ENCODE measurements at regions of chr15 and their contacts with region 1.

Region 1: GRCh38 chr15:40941528-40942336 is 11.5 kb upstream of the CHAC1 start:
- DNase-seq: peak; percentile 27
- H3K4me3 ChIP-seq: peak overlapping the region; percentile 54
- H3K27ac ChIP-seq: peak overlapping the region; percentile 81
- H3K27me3 ChIP-seq: no peaks in the 10 kb centered on the region
- CTCF ChIP-seq: peak; percentile 36; the same call in 1 of the 2 replicates

Region 2: DNA sequence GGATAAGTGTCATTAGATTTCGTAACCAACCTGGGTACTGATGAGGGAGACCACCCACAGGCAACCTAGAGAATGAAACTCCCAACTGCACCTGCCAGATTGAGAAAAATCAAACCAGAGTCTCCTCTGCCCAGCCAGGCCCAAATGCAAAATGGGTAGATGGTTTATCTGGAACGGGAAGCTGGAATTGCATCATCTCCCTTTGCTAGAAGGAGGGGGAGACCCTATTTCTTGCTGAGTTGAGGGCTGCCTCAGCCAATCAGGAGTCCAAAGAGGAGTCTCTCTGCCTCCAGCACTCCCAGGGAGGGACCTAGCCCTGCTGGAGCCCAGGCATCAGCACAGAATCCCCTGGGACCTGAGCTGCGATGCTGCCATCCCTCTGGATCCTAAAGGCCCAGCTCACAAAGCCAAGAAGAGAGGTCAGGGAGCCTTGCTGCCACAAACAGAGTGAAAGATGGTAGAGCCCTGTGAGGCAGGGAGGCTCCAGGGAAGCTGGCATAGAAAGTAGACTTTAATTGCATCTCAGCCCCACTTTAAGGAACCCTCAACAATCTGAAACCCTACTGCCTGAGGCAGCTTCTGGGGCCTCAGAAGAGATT is 194.7 kb before region 1 on chr15:
- CTCF ChIA-PET with region 1: no interaction called
- POLR2A ChIA-PET with region 1: no interaction called
- DNase-seq: no peak
- H3K4me3 ChIP-seq: no peak overlapping the region
- H3K27ac ChIP-seq: no peak overlapping the region
- H3K27me3 ChIP-seq: no peaks in the 10 kb centered on the region
- CTCF ChIP-seq: no peak

Region 3: DNA sequence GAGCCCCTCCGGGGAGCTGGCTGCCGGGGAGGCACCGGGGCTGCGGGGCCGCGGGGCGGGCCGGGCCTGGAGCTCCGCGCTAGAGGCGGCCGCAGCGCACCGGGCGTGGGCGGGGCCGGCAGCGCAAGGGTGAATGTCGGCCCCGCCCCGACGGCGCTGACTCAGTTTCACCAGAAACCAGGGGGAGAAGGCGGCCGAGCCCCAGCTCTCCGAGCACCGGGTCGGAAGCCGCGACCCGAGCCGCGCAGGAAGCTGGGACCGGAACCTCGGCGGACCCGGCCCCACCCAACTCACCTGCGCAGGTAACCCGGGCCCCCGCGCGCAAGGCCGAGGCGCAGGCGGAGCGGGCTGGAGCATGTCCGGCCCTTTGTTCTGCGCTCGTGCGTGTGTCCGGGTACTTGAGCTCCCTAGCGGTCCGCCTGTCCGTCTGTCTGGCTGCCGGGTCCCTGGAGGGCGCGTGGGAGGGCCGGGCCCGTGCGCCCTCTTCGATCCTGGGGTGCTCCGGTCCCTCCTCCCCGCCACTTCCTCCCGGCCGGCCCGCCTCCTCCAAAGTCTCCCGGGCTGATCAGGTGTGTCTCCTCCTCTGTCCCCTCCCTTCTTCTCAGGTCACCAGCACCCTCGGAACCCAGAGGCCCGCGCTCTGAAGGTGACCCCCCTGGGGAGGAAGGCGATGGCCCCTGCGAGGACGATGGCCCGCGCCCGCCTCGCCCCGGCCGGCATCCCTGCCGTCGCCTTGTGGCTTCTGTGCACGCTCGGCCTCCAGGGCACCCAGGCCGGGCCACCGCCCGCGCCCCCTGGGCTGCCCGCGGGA is 97.6 kb before region 1 on chr15 and contains the start of gene SPINT1:
- CTCF ChIA-PET with region 1: no interaction called
- POLR2A ChIA-PET with region 1: no interaction called
- DNase-seq: no peak
- H3K4me3 ChIP-seq: peak within 1 kb of the TSS; percentile 39
- H3K27ac ChIP-seq: no peak within 1 kb of the TSS
- H3K27me3 ChIP-seq: peaks cover 33% of the 10 kb centered on the region
- CTCF ChIP-seq: no peak
- polyA plus RNA-seq, gene SPINT1: 0.87 and 0.94 TPM in 2 replicates

Region 4: DNA sequence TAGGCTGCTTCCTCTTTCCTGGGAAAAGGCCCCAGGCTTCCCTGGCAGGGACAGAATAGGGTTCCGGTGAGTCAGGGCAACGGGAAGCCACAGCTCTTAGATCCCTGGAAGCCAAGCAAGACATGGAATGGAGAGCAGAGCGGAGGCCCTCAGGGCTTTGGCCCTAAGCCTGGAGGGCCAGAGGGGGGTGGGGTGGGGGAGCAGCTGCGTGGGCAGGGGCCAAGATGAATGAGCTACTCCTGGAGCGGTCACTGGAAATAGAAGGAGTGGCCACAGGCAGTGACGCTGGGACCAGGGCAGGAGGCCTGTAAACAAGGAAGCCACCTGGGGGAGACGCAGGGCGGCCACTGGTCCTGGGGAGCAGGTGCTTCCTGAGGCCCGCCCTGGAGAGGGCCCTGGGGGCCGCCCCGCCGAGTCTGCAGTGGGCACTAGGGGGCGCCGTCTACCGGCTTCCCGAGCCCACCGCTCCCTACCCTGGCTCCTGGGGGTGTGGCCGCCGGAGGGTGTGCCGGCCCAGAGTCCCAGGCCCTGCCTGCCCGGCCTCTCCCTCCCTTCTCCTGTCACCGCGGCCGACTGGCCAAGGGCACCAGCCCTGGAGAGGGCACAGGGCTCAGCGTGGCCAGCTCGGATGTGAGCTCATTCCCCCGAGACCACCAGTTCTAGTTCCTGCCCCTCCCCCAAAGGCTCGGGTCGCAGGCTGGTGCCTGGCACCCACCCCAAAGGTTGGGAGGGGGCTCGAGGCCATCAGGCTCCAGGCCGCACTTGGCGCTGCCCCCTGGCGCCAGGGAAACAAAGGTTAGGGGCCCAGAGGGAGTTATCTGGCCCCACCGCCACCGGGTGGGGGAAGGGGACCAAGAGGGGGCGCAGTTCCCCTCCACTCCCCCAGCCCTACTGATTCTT is 35.4 kb before region 1 on chr15:
- CTCF ChIA-PET with region 1: interaction called, 18 read pairs
- POLR2A ChIA-PET with region 1: interaction called, 5 read pairs
- DNase-seq: peak; percentile 86
- H3K4me3 ChIP-seq: peak overlapping the region; percentile 48
- H3K27ac ChIP-seq: peak overlapping the region; percentile 94
- H3K27me3 ChIP-seq: no peaks in the 10 kb centered on the region
- CTCF ChIP-seq: peak; percentile 80

Region 5: DNA sequence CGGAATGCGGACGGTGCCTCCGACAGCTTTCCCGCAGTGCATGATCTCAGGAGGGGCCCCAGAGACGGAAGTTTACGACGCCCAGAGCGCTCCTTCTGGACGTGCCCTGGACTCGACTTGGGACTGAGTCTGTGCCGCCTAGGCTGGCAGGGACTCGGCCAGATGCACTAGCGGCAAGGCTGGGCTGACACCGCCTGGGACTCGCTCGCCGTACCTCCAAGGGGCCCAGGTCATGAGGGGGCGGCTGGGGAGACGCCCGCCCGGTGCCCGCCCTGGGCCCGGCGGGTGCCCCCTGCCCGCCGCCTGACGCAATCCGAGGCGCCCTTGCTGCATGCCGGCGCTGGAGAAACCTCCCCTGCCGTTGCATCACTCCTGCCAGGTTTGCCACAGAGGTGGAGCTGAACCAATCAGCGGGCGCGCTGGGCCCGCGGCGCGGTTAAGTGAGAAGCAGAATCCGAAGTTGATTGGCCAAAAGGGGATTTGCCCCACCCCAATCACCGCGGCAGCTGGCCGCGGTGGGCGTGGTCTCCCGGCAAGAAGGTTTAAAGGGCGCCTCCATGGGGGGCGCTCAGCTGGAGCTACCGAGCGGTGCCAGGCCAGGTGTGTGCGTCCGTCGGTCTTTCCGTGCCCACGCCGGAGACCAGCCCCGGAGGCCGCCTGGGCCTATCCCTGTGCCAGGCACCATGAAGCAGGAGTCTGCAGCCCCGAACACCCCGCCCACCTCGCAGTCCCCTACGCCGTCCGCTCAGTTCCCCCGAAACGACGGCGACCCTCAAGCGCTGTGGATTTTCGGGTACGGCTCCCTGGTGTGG is 11.4 kb after region 1 on chr15 and contains the start of gene CHAC1:
- CTCF ChIA-PET with region 1: interaction called, 22 read pairs
- POLR2A ChIA-PET with region 1: interaction called, 29 read pairs
- DNase-seq: peak; percentile 91
- H3K4me3 ChIP-seq: peak within 1 kb of the TSS; percentile 95
- H3K27ac ChIP-seq: peak within 1 kb of the TSS; percentile 96
- H3K27me3 ChIP-seq: no peaks in the 10 kb centered on the region
- CTCF ChIP-seq: no peak
- polyA plus RNA-seq, gene CHAC1: 106 and 154 TPM in 2 replicates

Region 6: DNA sequence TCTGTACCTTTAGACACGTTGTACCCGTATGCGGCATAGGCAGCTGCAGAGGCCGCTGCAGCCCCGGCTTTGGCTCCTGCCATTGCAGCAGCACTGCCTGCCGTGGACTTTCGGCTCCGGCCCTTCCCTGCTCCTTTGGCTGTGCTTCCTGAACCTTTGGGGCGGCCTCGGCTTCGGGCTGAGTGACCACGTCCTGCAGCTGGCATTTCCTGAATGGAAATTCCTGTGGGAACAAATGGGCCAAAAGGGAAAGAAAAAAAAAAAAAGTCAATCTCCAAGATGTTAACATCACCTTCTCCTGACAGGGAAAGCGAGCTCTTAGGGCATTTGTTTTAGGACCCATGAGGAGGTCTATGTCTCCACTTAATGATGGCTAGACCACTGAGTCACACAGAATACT is 41.1 kb after region 1 on chr15:
- CTCF ChIA-PET with region 1: interaction called, 10 read pairs
- POLR2A ChIA-PET with region 1: interaction called, 6 read pairs
- DNase-seq: peak; percentile 67
- H3K4me3 ChIP-seq: no peak overlapping the region; the same call in 1 of the 2 replicates
- H3K27ac ChIP-seq: peak overlapping the region; percentile 84
- H3K27me3 ChIP-seq: no peaks in the 10 kb centered on the region
- CTCF ChIP-seq: no peak

Region 7: GRCh38 chr15:41022487-41023090 is 80.9 kb after region 1 on chr15:
- CTCF ChIA-PET with region 1: interaction called, 89 read pairs
- POLR2A ChIA-PET with region 1: interaction called, 4 read pairs
- DNase-seq: peak; percentile 51
- H3K4me3 ChIP-seq: no peak overlapping the region
- H3K27ac ChIP-seq: no peak overlapping the region
- H3K27me3 ChIP-seq: no peaks in the 10 kb centered on the region
- CTCF ChIP-seq: peak; percentile 94

Measured in AG04450 (cell line).